Caco-2 (cell line): ENCODE measurements at regions of chr10 and their contacts with region 1.

Region 1: DNA sequence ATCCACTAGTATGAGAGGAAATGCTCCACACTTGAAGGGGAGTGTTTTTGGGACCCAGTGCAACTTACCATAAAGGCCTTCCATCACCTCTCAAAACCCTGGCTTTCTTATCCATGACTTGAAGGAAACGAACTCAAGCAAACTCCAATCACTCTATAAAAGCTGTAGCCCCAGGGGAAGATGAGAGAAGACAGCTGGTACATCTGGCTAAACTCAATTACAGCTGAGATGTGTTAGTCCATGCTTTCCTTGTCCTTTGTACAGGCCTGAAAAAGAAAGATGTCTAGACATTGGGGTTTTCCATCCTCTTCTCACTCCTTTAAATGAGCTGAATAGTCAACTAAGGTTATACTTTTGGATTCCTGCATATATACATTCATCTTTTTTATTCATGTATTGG is 89.5 kb upstream of the ANKRD30A start:
- DNase-seq: no peak
- H3K4me3 ChIP-seq: no peak overlapping the region
- H3K4me3 Mint-ChIP-seq: no peak overlapping the region
- H3K27ac Mint-ChIP-seq: no peak overlapping the region
- H3K4me1 ChIP-seq: peaks cover 10% of the 10 kb centered on the region; the same call in 1 of the 2 replicates
- H3K4me1 Mint-ChIP-seq: peaks cover 6% of the 10 kb centered on the region
- H3K27me3 ChIP-seq: no peaks in the 10 kb centered on the region
- H3K27me3 Mint-ChIP-seq: no peaks in the 10 kb centered on the region
- CTCF ChIP-seq: no peak

Region 2: DNA sequence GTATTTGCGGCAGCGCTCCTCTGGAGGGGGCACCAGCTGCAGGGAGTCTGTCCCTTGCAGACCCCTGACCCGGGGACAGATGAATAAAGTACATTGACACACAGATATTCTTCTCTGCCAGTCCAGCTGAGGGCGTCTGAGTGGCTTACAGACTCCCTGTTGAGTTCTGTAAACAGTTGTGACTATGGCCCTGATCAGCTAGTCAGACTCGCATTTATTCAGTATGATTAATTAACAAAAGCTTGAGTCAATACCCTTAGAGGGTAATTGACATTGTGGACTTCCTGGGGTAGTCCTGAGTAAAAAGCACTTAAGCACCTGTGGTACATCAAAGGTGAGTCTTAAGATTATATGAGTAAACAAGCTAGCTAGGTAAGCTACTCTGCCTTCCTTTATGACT is 110.6 kb after region 1 on chr10:
- CTCF ChIA-PET with region 1: interaction called, 3 read pairs
- POLR2A ChIA-PET with region 1: no interaction called
- intact Hi-C with region 1: loop called (anchors 1 kb)
- DNase-seq: peak; percentile 70 to 71
- H3K4me3 ChIP-seq: no peak overlapping the region
- H3K4me3 Mint-ChIP-seq: no peak overlapping the region
- H3K27ac Mint-ChIP-seq: no peak overlapping the region
- H3K4me1 ChIP-seq: peaks cover 10% of the 10 kb centered on the region
- H3K4me1 Mint-ChIP-seq: peaks cover 14% of the 10 kb centered on the region
- H3K27me3 ChIP-seq: no peaks in the 10 kb centered on the region
- H3K27me3 Mint-ChIP-seq: no peaks in the 10 kb centered on the region
- CTCF ChIP-seq: peak; percentile 32 to 43